ENCODE measurements at regions of chr19 and their contacts with region 1.

Region 1: DNA sequence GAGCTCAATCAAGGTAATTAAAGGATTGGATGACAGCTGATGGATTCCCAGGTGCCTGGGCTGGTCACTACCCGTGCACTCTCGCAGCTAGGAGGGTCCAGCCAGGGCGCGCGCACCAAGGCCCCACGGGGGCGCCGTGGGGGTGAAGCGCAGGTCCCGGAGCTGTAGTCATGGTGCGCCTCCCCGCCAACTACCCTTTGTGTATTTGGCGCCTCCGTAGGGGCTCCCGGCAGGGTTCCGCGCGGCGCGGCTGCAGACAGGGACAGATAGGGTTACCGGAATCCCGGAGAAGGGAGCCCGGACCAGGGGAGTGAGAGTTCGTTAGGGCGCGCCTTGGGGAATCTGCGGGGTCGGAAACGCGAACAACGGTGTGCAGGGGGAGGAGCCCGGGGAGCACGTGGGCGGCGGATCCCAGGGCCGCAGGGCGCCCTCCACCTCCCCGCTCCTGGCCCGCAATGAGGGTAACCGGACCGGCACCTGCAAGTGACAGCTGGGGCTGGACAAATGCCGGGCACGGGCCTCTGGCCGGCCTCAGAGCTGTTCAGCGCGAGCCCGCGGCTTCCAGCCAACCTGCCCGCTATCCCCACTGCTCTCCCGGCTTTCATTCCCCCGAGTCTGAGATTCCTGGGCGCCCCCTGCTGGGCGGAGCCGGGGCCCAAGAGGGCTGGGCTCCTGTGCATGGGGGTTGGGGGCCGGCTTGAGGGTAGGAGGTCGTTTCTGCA is 3.4 kb upstream of the PRAM1 start:
- DNase-seq: peak; percentile 58
- ATAC-seq: peak; percentile 86
- H3K4me3 ChIP-seq: peak overlapping the region; percentile 59 to 74 (median 66)
- H3K27ac ChIP-seq: peak overlapping the region; percentile 54
- H3K4me1 ChIP-seq: peaks cover 25% of the 10 kb centered on the region
- H3K27me3 ChIP-seq: peaks cover 0 to 8% of the 10 kb centered on the region in 2 experiments; a peak in 1 of 5 replicates
- CTCF ChIP-seq: peak; percentile 93
- EP300 ChIP-seq: no peak
- POLR2A ChIP-seq: peak; percentile 47 to 50; a peak in 2 of 4 replicates
- RAD21 ChIP-seq: peak; percentile 86

Region 2: GRCh38 chr19:8340341-8341096 is 165.3 kb before region 1 on chr19:
- CTCF ChIA-PET with region 1: no interaction called
- POLR2A ChIA-PET with region 1: no interaction called
- in situ Hi-C with region 1: no loop called
- intact Hi-C with region 1: loop called (anchors 2 kb)
- DNase-seq: no peak
- ATAC-seq: peak; percentile 51
- H3K4me3 ChIP-seq: peak overlapping the region in 1 of 3 experiments; percentile 24; a peak in 1 of 6 replicates
- H3K27ac ChIP-seq: no peak overlapping the region
- H3K4me1 ChIP-seq: peaks cover 61% of the 10 kb centered on the region
- H3K27me3 ChIP-seq: peaks cover 2 to 28% of the 10 kb centered on the region in 2 experiments; a peak in 3 of 5 replicates
- CTCF ChIP-seq: peak; percentile 41
- EP300 ChIP-seq: no peak
- POLR2A ChIP-seq: no peak
- RAD21 ChIP-seq: no peak

Region 3: DNA sequence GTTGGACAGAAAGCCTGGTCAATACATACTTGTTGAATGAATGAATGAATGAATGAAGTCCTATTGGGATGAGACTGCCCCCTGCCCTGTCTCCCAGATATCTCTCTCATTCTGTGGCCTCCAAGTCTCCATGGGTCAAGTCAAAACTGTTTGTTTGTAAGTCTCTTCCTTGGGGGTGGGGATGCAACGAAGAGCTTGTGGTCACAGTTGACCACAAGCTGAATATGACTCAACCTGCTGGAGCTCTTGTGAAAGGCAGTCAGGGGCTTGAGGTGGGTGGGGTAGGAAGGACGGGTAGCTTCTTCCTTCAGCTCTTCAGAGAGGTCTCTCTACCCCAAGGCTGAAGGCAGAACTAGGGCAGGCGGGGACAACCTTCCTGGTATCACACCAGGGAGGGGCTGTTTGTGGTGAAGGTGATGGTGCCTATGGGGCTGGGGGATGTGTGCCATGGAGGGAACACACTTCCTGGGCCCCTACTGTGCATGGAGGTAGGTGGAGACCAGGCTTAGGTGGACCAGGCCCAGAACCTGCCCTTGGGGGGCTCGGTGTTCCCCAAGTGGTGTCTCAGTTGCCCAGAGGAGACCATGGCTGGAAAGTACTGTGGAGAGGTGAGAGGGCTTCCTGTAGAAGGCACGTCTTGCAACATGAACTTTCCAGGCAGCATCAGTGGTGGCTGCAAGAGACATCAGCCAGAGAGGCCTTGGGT is 63.4 kb after region 1 on chr19:
- CTCF ChIA-PET with region 1: no interaction called
- POLR2A ChIA-PET with region 1: no interaction called
- in situ Hi-C with region 1: no loop called
- intact Hi-C with region 1: no loop called
- DNase-seq: no peak
- ATAC-seq: no peak
- H3K4me3 ChIP-seq: no peak overlapping the region
- H3K27ac ChIP-seq: no peak overlapping the region
- H3K4me1 ChIP-seq: no peaks in the 10 kb centered on the region
- H3K27me3 ChIP-seq: no peaks in the 10 kb centered on the region; a peak in 1 of 5 replicates
- CTCF ChIP-seq: no peak
- EP300 ChIP-seq: no peak
- POLR2A ChIP-seq: no peak
- RAD21 ChIP-seq: no peak